ENCODE measurements at regions of chr1 and their contacts with region 1.

Region 1: DNA sequence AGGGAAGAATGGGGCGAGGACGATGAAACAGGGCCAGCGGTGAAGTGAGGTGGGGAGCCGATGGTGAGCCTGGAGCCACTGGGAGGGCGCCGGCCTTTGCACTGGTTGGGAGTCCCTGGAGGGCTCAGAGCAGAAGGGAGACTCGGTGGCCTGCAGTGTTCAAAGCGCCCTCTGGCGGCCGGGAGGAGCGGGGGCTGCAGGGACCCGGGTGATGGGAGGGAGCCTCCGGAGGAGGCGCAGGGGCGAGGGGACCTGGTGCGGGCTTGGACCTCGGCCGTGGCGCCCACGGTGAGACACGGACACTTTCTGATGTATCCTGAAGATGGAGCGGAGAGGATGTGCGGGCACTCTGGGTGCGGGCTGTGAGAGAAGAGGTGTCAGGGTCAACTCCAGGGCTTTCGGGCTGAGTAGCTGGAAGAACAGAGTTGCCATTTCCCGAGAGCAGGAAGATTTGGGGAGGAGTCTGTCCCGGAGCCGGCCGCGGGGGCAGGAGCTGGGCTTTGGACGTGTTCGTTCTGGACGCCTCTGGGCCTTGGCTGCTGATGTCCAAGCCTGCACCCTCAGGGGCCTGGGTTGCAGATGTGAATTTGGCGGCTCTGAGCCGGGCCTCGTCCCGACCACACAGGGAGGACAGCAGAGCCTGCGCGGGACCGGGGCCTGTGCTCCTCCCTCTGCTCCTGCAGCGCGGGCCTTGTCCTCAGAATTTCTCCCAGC is 29.7 kb downstream of the HEYL start:
- DNase-seq: peak; percentile 50
- ATAC-seq: peak; percentile 91
- H3K4me3 ChIP-seq: peak overlapping the region; percentile 28 to 32
- H3K27ac ChIP-seq: peak overlapping the region; percentile 15; the same call in 1 of the 2 replicates
- H3K4me1 ChIP-seq: peaks cover 2 to 18% of the 10 kb centered on the region in 2 experiments; a peak in 3 of 4 replicates
- H3K27me3 ChIP-seq: no peaks in the 10 kb centered on the region
- CTCF ChIP-seq: peak; percentile 77 to 95 (median 93)
- POLR2A ChIP-seq: peak; percentile 59
- RAD21 ChIP-seq: peak; percentile 46

Region 2: GRCh38 chr1:39566441-39567137 is 43.2 kb before region 1 on chr1:
- CTCF ChIA-PET with region 1: no interaction called
- POLR2A ChIA-PET with region 1: no interaction called
- RAD21 ChIA-PET with region 1: no interaction called
- intact Hi-C with region 1: no loop called
- DNase-seq: no peak
- ATAC-seq: no peak
- H3K4me3 ChIP-seq: no peak overlapping the region
- H3K27ac ChIP-seq: no peak overlapping the region
- H3K4me1 ChIP-seq: no peaks in the 10 kb centered on the region
- H3K27me3 ChIP-seq: no peaks in the 10 kb centered on the region
- CTCF ChIP-seq: no peak
- POLR2A ChIP-seq: no peak
- RAD21 ChIP-seq: no peak

Region 3: DNA sequence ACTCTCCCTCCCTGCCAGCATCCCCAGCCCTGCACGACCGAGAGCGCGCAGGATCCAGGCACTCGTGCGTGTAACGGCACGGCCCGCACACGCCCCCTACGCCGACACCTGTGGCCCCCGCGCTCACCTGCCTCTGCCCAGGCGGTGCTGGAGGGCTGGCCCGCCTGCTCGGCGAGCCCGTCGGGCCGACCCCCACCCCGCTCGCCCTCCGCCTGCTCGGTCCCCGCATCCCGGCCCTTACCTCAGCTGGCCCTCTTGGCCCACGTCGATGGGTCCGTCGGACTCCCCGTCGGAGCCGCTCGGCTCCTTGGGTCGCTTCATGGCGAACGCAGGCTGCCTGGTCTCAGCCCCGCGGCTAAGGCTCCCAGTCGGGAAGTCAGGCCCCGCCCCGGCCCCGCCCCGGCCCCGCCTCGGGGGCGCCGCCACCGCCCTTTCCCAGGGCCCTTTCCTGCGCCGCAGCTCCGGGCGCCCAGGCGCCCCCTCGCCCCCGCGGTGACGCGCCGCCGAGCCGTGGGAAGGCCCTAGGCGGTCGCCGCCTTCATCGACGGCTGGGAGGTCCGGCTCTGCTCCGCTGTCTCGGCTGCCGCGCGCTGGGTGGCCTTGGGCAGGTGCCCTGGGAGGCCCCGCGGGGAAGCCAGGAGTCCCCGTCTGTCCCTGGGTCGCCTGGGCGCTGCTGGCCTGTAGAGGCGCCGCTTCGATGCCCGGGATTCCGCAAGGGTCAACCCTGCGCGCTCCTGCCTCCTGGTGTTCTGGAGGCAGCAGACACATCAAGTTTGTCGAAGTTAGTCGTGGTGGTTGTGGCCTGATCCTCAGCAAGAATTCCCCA is 29.7 kb after region 1 on chr1 and contains the start of gene HEYL:
- CTCF ChIA-PET with region 1: interaction called, 27 read pairs
- POLR2A ChIA-PET with region 1: interaction called, 3 read pairs
- RAD21 ChIA-PET with region 1: no interaction called
- intact Hi-C with region 1: no loop called
- DNase-seq: peak; percentile 65
- ATAC-seq: peak; percentile 95
- H3K4me3 ChIP-seq: peak within 1 kb of the TSS; percentile 67 to 86
- H3K27ac ChIP-seq: peak within 1 kb of the TSS; percentile 64
- H3K4me1 ChIP-seq: peaks cover 8 to 17% of the 10 kb centered on the region in 2 experiments
- H3K27me3 ChIP-seq: no peaks in the 10 kb centered on the region
- CTCF ChIP-seq: peak; percentile 58 to 90 (median 72)
- POLR2A ChIP-seq: peak; percentile 28
- RAD21 ChIP-seq: peak; percentile 35; the same call in 1 of the 2 replicates
- total RNA-seq, gene HEYL: 8.8 TPM

Region 4: GRCh38 chr1:39653546-39654031 is 43.8 kb after region 1 on chr1:
- CTCF ChIA-PET with region 1: interaction called, 36 read pairs
- POLR2A ChIA-PET with region 1: interaction called, 8 read pairs
- RAD21 ChIA-PET with region 1: interaction called, 5 to 7 read pairs
- intact Hi-C with region 1: loop called (anchors 1 kb)
- DNase-seq: peak; percentile 71
- ATAC-seq: peak; percentile 69
- H3K4me3 ChIP-seq: no peak overlapping the region
- H3K27ac ChIP-seq: no peak overlapping the region
- H3K4me1 ChIP-seq: peaks cover 0 to 19% of the 10 kb centered on the region in 2 experiments; a peak in 2 of 4 replicates
- H3K27me3 ChIP-seq: no peaks in the 10 kb centered on the region
- CTCF ChIP-seq: peak; percentile 84 to 91 (median 87)
- POLR2A ChIP-seq: no peak
- RAD21 ChIP-seq: peak; percentile 91

Region 5: DNA sequence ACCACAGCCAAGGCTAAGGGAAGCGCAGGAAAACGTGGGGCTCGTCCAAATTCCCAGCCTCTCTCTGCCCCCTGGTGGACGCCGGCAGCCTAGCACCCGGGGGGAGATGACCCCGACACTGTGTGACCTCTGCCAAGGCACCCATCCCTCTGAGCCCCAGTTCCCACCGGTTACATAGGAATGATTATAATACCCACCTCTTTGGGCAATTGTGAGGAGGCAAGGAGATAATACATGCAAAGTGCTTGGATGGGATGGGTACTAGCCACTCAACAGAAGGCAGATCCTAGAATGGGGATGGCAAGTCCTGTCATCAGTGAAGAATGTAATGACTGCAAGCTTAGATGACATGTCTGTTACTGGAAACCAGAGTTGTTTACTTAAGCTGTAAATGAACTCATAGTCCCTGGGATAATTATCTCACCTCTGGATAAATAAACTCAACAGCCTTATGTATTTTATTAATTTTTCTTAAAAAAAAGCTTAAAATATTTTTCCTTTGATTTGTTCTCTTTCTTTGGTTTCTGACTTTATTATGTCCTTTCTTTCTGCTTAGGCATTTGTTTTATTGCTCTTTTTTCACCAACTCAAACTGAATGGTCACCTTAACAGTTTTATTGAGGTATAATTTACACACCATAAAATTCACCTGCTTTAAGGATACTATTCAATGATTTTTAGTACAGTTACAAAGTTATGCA is 190.1 kb after region 1 on chr1:
- CTCF ChIA-PET with region 1: interaction called, 27 read pairs
- POLR2A ChIA-PET with region 1: no interaction called
- RAD21 ChIA-PET with region 1: interaction called in 1 of 2 experiments, 5 read pairs
- intact Hi-C with region 1: loop called (anchors 10 kb)
- DNase-seq: peak; percentile 39
- ATAC-seq: peak; percentile 89
- H3K4me3 ChIP-seq: peak overlapping the region; percentile 19 to 43
- H3K27ac ChIP-seq: peak overlapping the region; percentile 66; the same call in 1 of the 2 replicates
- H3K4me1 ChIP-seq: peaks cover 9 to 23% of the 10 kb centered on the region in 2 experiments
- H3K27me3 ChIP-seq: no peaks in the 10 kb centered on the region
- CTCF ChIP-seq: peak; percentile 77 to 85 (median 79)
- POLR2A ChIP-seq: no peak
- RAD21 ChIP-seq: peak; percentile 74

Region 6: DNA sequence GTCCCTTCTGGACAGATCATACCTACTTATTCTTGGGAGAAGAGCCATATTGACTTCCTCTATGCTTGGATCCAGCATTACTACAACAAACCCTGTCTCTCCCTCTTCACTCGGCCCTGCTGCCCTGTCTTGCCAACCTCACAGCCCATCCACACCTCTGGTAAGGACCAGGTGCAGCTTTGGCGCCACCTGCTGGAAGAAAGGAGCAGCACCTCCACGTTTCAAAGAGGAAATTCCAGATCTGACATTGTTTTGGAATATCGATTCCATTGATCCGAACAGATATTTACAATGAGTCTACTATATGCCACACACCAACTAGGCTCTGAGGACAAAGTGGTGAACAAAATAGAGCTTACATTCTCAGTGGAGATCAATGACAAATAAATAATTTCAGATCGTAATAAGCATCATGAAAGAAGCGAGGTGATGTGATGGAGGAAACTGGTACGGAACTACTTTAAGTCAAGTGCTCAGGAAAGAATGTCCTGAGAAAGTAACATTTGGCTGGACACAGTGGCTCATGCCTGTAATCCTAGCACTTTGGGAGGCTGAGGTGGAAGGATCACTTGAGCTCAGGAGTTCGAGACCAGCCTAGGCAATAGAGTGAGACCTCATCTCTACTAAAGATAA is 363.8 kb after region 1 on chr1:
- CTCF ChIA-PET with region 1: no interaction called
- POLR2A ChIA-PET with region 1: no interaction called
- RAD21 ChIA-PET with region 1: no interaction called
- intact Hi-C with region 1: loop called (anchors 1 kb)
- DNase-seq: peak; percentile 45
- ATAC-seq: peak; percentile 89
- H3K4me3 ChIP-seq: no peak overlapping the region
- H3K27ac ChIP-seq: no peak overlapping the region
- H3K4me1 ChIP-seq: peaks cover 6 to 9% of the 10 kb centered on the region in 2 experiments; a peak in 3 of 4 replicates
- H3K27me3 ChIP-seq: no peaks in the 10 kb centered on the region
- CTCF ChIP-seq: peak; percentile 96 to 99 (median 98)
- POLR2A ChIP-seq: no peak
- RAD21 ChIP-seq: peak; percentile 98

Measured in HCT116 (cell line).